ENCODE measurements at regions of chr13 and their contacts with region 1.

Region 1: GRCh38 chr13:31424117-31424729 is 224.4 kb downstream of the B3GLCT start:
- DNase-seq: peak; percentile 73
- H3K4me3 ChIP-seq: no peak overlapping the region; a peak in 1 of 4 replicates
- H3K27ac ChIP-seq: no peak overlapping the region
- H3K4me1 ChIP-seq: no peaks in the 10 kb centered on the region; a peak in 1 of 4 replicates
- H3K27me3 ChIP-seq: no peaks in the 10 kb centered on the region; the same call in 1 of the 2 replicates
- CTCF ChIP-seq: peak; percentile 92
- EP300 ChIP-seq: no peak
- RAD21 ChIP-seq: peak; percentile 96

Region 2: DNA sequence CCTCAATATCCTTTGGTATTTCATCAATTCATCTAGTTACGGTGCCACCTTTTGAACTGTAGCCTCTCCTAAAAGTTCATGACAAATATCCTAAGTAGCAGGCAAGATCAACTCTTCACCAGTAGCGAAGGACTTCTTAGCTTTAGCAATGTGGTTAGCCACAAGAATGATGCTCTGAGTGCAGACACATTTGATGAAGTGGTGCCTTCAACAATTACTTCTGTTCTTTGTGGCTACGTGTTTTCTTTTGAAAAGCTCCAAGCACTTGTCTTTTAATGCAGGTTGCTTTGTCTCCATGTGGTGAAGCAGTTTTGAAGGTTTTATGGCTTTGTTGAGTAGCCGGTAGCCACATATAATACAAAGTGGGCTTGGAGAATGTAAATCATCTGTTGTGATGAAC is 29.7 kb before region 1 on chr13:
- CTCF ChIA-PET with region 1: no interaction called
- POLR2A ChIA-PET with region 1: no interaction called
- DNase-seq: no peak
- H3K4me3 ChIP-seq: no peak overlapping the region
- H3K27ac ChIP-seq: no peak overlapping the region
- H3K4me1 ChIP-seq: no peaks in the 10 kb centered on the region
- H3K27me3 ChIP-seq: no peaks in the 10 kb centered on the region; the same call in 1 of the 2 replicates
- CTCF ChIP-seq: no peak
- EP300 ChIP-seq: no peak
- RAD21 ChIP-seq: no peak

Region 3: GRCh38 chr13:31409678-31410356 is 14.4 kb before region 1 on chr13:
- CTCF ChIA-PET with region 1: interaction called, 53 read pairs
- POLR2A ChIA-PET with region 1: no interaction called
- DNase-seq: no peak
- H3K4me3 ChIP-seq: no peak overlapping the region
- H3K27ac ChIP-seq: no peak overlapping the region
- H3K4me1 ChIP-seq: no peaks in the 10 kb centered on the region
- H3K27me3 ChIP-seq: peaks cover 5% of the 10 kb centered on the region; the same call in 1 of the 2 replicates
- CTCF ChIP-seq: peak; percentile 30
- EP300 ChIP-seq: no peak
- RAD21 ChIP-seq: no peak

Region 4: DNA sequence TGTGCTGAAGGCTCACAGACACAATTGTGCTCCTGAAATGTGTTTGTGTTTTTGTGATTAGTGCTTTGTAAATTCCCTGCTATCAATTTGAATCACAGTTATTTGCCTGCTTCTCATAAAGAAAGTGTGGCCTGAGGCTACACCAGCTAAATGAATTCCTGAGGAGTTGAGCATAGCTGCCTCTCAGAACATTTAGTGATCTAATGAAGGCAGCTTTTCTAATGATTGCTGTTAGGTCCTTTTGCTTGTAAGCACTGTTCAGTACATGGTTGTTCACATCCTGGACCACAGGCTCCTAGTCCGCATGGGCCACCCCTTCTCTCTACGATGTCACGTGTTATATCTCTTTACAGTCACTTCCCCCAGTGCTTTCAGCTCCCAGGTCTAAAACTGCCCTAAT is 13.8 kb after region 1 on chr13:
- CTCF ChIA-PET with region 1: interaction called, 10 read pairs
- POLR2A ChIA-PET with region 1: no interaction called
- DNase-seq: peak; percentile 6
- H3K4me3 ChIP-seq: no peak overlapping the region
- H3K27ac ChIP-seq: no peak overlapping the region; a peak in 1 of 4 replicates
- H3K4me1 ChIP-seq: peaks cover 0 to 8% of the 10 kb centered on the region in 2 experiments; a peak in 2 of 4 replicates
- H3K27me3 ChIP-seq: no peaks in the 10 kb centered on the region
- CTCF ChIP-seq: no peak
- EP300 ChIP-seq: no peak; a peak in 1 of 4 replicates
- RAD21 ChIP-seq: no peak

Region 5: GRCh38 chr13:31747291-31747690 is 323.1 kb after region 1 on chr13:
- CTCF ChIA-PET with region 1: interaction called, 66 read pairs
- POLR2A ChIA-PET with region 1: no interaction called
- DNase-seq: no peak
- H3K4me3 ChIP-seq: no peak overlapping the region
- H3K27ac ChIP-seq: no peak overlapping the region
- H3K4me1 ChIP-seq: peaks cover 0 to 14% of the 10 kb centered on the region in 2 experiments; a peak in 2 of 4 replicates
- H3K27me3 ChIP-seq: no peaks in the 10 kb centered on the region
- CTCF ChIP-seq: no peak
- EP300 ChIP-seq: no peak
- RAD21 ChIP-seq: no peak

Measured in SK-N-SH (cell line).